Caco-2 (cell line): ENCODE measurements at regions of chr12 and their contacts with region 1.

Region 1: GRCh38 chr12:89384050-89384758 is 31.9 kb upstream of the DUSP6 start:
- DNase-seq: peak in 1 of 2 experiments; percentile 47
- H3K4me3 ChIP-seq: no peak overlapping the region
- H3K4me3 Mint-ChIP-seq: no peak overlapping the region
- H3K27ac Mint-ChIP-seq: peak overlapping the region; percentile 95
- H3K4me1 ChIP-seq: peaks cover 75% of the 10 kb centered on the region
- H3K4me1 Mint-ChIP-seq: peaks cover 47% of the 10 kb centered on the region
- H3K27me3 ChIP-seq: no peaks in the 10 kb centered on the region
- H3K27me3 Mint-ChIP-seq: no peaks in the 10 kb centered on the region
- CTCF ChIP-seq: no peak

Region 2: DNA sequence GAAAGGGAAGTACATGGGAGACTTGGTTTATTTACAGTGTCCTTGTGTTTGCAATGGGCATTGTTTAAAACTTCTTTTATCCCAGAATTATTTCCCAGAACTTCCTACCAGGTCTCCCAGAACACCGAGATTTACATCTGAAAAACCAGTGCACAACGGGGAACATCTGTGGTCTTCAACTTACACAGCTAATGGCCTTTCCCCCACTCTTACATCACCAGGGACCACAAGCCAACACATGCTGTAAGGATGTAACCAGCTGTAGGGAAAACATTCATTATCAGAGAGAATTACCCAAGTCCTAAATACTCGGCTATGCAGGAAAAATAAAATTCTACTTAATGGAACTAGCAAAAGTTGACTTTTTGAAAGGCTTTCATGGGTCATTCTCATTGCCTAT is 299.5 kb before region 1 on chr12:
- CTCF ChIA-PET with region 1: no interaction called
- POLR2A ChIA-PET with region 1: no interaction called
- intact Hi-C with region 1: loop called (anchors 1 kb)
- DNase-seq: no peak
- H3K4me3 ChIP-seq: no peak overlapping the region
- H3K4me3 Mint-ChIP-seq: no peak overlapping the region
- H3K27ac Mint-ChIP-seq: no peak overlapping the region
- H3K4me1 ChIP-seq: peaks cover 38% of the 10 kb centered on the region
- H3K4me1 Mint-ChIP-seq: peaks cover 22% of the 10 kb centered on the region
- H3K27me3 ChIP-seq: no peaks in the 10 kb centered on the region
- H3K27me3 Mint-ChIP-seq: no peaks in the 10 kb centered on the region
- CTCF ChIP-seq: no peak

Region 3: GRCh38 chr12:89326239-89327040 is 57.8 kb before region 1 on chr12:
- CTCF ChIA-PET with region 1: no interaction called
- POLR2A ChIA-PET with region 1: no interaction called
- intact Hi-C with region 1: loop called (anchors 2 kb)
- DNase-seq: peak; percentile 65 to 86
- H3K4me3 ChIP-seq: no peak overlapping the region
- H3K4me3 Mint-ChIP-seq: peak overlapping the region; percentile 57
- H3K27ac Mint-ChIP-seq: peak overlapping the region; percentile 73
- H3K4me1 ChIP-seq: peaks cover 40% of the 10 kb centered on the region
- H3K4me1 Mint-ChIP-seq: peaks cover 39% of the 10 kb centered on the region
- H3K27me3 ChIP-seq: no peaks in the 10 kb centered on the region
- H3K27me3 Mint-ChIP-seq: no peaks in the 10 kb centered on the region
- CTCF ChIP-seq: no peak

Region 4: DNA sequence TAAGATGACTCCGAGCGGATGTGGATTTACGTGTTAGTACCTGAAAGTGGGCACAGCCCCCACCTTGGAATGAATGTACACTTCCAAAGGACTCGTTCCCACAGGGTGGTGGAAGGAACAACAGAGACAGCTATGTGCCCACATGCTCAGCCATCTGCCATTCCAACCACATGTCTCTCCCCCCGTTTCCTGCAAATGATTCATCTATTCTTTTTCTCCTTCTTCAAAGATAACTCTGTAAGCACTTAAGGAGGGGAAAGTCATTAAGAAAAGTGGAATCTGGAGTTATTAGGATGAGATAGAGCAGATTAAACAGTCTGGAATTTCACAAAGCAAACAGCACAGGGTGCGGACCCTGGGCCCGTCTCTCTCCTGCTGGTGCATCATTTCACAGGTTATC is 13.4 kb before region 1 on chr12:
- CTCF ChIA-PET with region 1: no interaction called
- POLR2A ChIA-PET with region 1: interaction called, 3 read pairs
- intact Hi-C with region 1: loop called (anchors 1 kb)
- DNase-seq: peak; percentile 57 to 85
- H3K4me3 ChIP-seq: no peak overlapping the region
- H3K4me3 Mint-ChIP-seq: peak overlapping the region; percentile 7
- H3K27ac Mint-ChIP-seq: peak overlapping the region; percentile 62
- H3K4me1 ChIP-seq: peaks cover 81% of the 10 kb centered on the region
- H3K4me1 Mint-ChIP-seq: peaks cover 52% of the 10 kb centered on the region
- H3K27me3 ChIP-seq: no peaks in the 10 kb centered on the region
- H3K27me3 Mint-ChIP-seq: no peaks in the 10 kb centered on the region
- CTCF ChIP-seq: no peak

Region 5: DNA sequence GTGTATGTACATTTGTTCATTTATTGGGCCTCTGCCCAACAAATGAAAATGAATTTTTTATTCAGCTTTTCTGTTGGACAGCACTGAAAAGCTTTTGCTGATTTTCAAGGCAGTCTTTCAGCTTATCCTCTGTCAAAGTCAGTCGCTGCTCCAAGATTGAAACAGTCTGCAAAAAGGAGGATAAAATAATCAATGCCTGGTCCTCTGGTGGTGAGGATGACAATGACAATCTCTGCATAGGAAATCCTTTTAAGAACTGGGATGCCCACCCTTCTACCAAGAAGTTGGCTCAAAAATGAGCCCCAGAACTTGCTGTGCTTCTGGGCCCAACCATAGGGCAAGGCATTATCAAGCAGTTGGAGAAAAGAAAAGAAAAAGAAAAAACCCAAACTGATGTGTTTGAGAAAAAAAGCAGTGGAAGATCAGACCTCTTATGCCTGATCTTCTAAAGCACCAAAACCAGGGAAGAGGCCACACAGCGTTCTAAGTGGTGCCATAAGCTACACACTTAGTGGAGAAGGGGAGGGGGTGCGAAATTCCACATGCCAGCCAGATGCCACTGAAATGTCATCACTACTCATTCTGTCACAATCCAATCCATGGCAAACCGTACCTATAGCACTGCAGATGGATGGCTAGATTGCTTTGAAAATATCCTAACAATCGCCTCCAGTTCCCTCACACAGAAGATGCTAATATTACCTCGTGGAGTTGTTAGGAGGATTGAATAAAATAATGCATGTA is 37.1 kb after region 1 on chr12:
- CTCF ChIA-PET with region 1: no interaction called
- POLR2A ChIA-PET with region 1: no interaction called
- intact Hi-C with region 1: loop called (anchors 1 kb)
- DNase-seq: no peak
- H3K4me3 ChIP-seq: no peak overlapping the region
- H3K4me3 Mint-ChIP-seq: no peak overlapping the region
- H3K27ac Mint-ChIP-seq: no peak overlapping the region
- H3K4me1 ChIP-seq: 0 out of 2 replicates have a peak, but pooled peaks cover 2% of the 10 kb centered on the region
- H3K4me1 Mint-ChIP-seq: peaks cover 2% of the 10 kb centered on the region
- H3K27me3 ChIP-seq: no peaks in the 10 kb centered on the region
- H3K27me3 Mint-ChIP-seq: no peaks in the 10 kb centered on the region
- CTCF ChIP-seq: peak; percentile 52 to 56

Region 6: DNA sequence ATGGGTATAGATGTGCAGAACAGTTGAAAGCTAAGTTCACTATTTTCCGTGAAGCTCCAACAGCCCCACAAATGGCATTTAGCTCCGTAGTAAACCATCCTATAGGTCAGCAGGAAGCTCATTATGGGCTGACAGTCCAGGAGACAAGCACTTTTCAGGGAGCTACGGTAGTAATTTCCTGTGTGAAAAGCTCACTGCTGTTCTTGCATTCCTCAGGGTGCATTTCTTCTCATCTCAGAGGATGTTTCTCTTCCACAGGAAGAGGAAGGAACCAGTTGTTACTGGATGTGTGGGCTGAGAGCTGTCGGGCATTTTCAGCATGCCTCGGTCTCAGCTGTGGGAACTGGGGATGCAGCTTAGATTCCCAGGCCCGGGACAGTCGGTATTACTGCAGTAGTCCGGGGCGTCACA is 67.6 kb after region 1 on chr12:
- CTCF ChIA-PET with region 1: interaction called, 3 read pairs
- POLR2A ChIA-PET with region 1: interaction called, 12 read pairs
- intact Hi-C with region 1: loop called (anchors 2 kb)
- DNase-seq: no peak
- H3K4me3 ChIP-seq: no peak overlapping the region
- H3K4me3 Mint-ChIP-seq: peak overlapping the region; percentile 33
- H3K27ac Mint-ChIP-seq: no peak overlapping the region
- H3K4me1 ChIP-seq: peaks cover 48% of the 10 kb centered on the region
- H3K4me1 Mint-ChIP-seq: peaks cover 37% of the 10 kb centered on the region
- H3K27me3 ChIP-seq: no peaks in the 10 kb centered on the region
- H3K27me3 Mint-ChIP-seq: no peaks in the 10 kb centered on the region
- CTCF ChIP-seq: no peak